Heart right ventricle (tissue), 16 donors: ENCODE measurements at regions of chr10 and their contacts with region 1.

Region 1: DNA sequence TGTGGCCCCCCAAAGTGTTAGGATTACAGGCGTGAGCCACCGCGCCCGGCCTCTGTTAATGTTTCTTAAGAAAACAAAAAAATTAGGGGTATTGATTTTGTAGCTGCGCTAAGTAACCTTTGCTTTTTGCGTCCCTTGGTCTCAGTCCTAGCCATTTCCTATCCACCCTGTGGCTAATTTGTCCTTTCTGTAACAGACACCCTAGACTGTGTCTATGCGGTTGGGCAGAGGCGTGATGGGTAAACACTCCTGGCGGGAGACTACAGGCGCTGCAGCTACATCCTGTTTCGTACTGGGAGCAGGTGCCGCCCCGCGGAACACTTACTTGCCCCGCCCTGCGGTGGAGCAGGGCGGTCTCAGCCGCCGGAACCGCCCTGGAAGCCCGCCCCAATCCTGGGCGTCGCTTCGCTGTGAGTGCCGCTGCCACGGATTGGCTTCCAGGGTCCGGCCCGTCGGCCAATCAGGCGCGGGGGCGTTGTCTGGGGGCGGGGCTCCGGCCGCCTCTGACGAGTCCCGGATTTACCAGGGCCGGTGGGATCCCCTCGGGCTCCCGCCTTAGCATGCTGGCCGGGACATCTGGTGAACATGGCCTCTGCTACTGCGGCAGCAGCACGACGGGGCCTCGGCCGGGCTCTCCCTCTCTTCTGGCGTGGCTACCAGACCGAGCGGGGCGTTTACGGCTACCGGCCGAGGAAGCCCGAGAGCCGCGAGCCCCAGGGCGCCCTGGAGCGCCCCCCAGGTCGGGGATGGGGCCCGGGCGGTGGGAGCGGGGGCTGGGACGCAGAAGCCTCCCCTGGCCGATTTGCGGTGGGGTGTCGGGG is at the start of gene DHTKD1:
- DNase-seq: peak; percentile 98 to 99
- ATAC-seq: peak; percentile 99 to 100 (median 100)
- H3K4me3 ChIP-seq: peak within 1 kb of the TSS; percentile 75 to 99 (median 90)
- H3K27ac ChIP-seq: peak within 1 kb of the TSS in 9 of 10 donors; percentile 67 to 92 (median 82)
- H3K4me1 ChIP-seq: peaks cover 0 to 18% (median 11%) of the 10 kb centered on the region in 9 donors
- H3K27me3 ChIP-seq: no peaks in the 10 kb centered on the region
- CTCF ChIP-seq: peak; percentile 30 to 60 (median 49)
- total RNA-seq, gene DHTKD1: 13.7 to 44.0 (median 31.0) TPM

Region 2: GRCh38 chr10:11949152-11949551 is 119.5 kb before region 1 on chr10:
- intact Hi-C with region 1: no loop called
- DNase-seq: no peak
- ATAC-seq: no peak
- H3K4me3 ChIP-seq: no peak overlapping the region
- H3K27ac ChIP-seq: no peak overlapping the region
- H3K4me1 ChIP-seq: peaks cover 0 to 6% (median 0%) of the 10 kb centered on the region in 9 donors
- H3K27me3 ChIP-seq: no peaks in the 10 kb centered on the region
- CTCF ChIP-seq: no peak

Region 3: GRCh38 chr10:12042797-12043651 is 25.6 kb before region 1 on chr10 and contains the start of gene UPF2:
- intact Hi-C with region 1: loop called in 4 of 10 experiments (anchors 1 to 2 kb)
- DNase-seq: peak; percentile 99
- ATAC-seq: peak; percentile 95 to 98 (median 97)
- H3K4me3 ChIP-seq: peak within 1 kb of the TSS; percentile 94 to 100 (median 98)
- H3K27ac ChIP-seq: peak within 1 kb of the TSS; percentile 90 to 100 (median 98)
- H3K4me1 ChIP-seq: peaks cover 0 to 23% (median 17%) of the 10 kb centered on the region in 9 donors
- H3K27me3 ChIP-seq: no peaks in the 10 kb centered on the region
- CTCF ChIP-seq: no peak
- total RNA-seq, gene UPF2: 12.1 to 20.2 (median 16.0) TPM

Region 4: GRCh38 chr10:12103802-12104201 is 35.1 kb after region 1 on chr10:
- intact Hi-C with region 1: no loop called
- DNase-seq: no peak
- ATAC-seq: no peak
- H3K4me3 ChIP-seq: no peak overlapping the region
- H3K27ac ChIP-seq: no peak overlapping the region
- H3K4me1 ChIP-seq: no peaks in the 10 kb centered on the region
- H3K27me3 ChIP-seq: no peaks in the 10 kb centered on the region
- CTCF ChIP-seq: no peak

Region 5: GRCh38 chr10:12129222-12130111 is 60.8 kb after region 1 on chr10 and contains the start of gene SEC61A2:
- intact Hi-C with region 1: loop called in 1 of 10 experiments (anchors 2 kb)
- DNase-seq: peak; percentile 94 to 98
- ATAC-seq: peak; percentile 97 to 100 (median 98)
- H3K4me3 ChIP-seq: peak within 1 kb of the TSS; percentile 65 to 99 (median 94)
- H3K27ac ChIP-seq: peak within 1 kb of the TSS; percentile 37 to 96 (median 88)
- H3K4me1 ChIP-seq: peaks cover 0 to 14% (median 7%) of the 10 kb centered on the region in 9 donors
- H3K27me3 ChIP-seq: no peaks in the 10 kb centered on the region
- CTCF ChIP-seq: no peak
- total RNA-seq, gene SEC61A2: 5.8 to 17.8 (median 11.1) TPM